Thyroid gland (tissue), 4 donors: ENCODE measurements at regions of chr5 and their contacts with region 1.

Region 1: DNA sequence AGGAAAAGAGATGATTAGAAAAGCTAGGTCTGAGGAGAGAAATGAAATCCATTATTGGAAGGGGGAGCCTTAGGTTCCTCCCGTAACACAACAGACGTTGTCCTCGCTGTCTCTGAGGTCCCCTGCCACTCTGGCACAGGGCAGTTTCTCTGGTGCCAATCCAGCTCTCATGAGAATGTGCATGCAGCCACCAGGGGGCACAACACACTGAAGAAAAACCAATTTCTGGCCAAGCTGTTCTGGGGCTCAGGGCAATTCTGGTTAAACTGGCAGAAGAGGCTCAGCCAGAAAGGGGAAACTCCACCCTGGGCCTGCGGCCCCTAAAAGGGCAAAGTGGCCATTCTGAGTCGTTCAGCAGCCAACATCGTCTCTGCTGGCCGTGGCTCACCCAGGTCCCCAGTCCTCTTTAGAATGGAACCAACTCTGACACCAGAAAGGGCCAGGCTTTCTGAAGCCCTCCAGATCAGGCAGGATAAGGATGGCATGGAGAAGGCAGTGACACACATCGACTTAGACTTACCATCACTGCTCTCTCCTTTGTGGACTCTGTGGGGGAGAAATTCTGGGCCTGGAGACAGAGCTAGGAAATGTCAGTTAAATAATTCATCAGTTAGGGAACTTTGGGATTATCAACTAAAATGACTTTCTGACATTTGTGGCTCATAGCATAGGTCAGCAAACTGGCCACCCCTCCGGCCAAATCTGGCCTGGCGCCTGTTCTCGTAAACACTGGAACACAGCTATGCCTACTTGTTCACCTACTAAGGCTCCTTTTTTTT is 58.5 kb upstream of the GOLPH3 start:
- DNase-seq: peak; percentile 84 to 88
- H3K4me3 ChIP-seq: no peak overlapping the region
- H3K27ac ChIP-seq: peak overlapping the region in 2 of 3 donors; percentile 37 to 47
- H3K4me1 ChIP-seq: peaks cover 11 to 26% of the 10 kb centered on the region in 2 donors
- H3K27me3 ChIP-seq: no peaks in the 10 kb centered on the region
- CTCF ChIP-seq: peak; percentile 72 to 91 (median 83)
- POLR2A ChIP-seq: no peak

Region 2: DNA sequence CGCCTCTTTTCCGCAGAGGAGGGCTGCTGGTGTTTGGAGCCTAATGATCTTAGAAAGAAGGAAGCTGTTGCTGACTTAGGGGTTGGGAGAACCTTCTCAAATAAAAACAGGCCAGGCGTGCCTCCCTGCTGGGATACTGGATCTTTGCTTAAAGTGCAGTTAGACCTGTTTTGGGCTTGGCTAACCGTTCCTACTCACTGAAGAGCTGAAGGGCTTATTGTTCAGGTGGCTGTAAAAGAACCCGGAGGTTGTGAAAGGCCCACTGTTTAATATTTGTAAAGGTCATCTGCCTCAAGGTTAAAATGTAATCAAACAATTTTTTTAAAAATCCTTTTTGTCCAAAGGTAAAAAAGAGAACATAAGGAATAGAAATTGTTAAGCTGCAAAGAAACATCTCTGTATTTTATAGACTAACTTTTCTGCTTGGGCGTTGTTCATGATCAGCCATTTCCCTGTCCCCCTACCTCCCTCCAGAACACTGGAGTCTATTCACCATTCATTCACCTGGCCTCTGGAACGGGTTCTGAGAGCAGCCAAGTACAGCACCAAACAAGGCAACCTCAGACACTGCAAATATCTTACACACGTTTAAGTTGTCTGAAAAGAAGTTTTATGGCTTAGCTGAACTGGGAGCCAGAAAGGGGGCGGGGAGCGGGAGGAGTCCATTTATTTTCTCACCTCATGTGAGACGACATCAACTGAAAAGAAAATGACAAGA is 98.7 kb after region 1 on chr5:
- intact Hi-C with region 1: loop called (anchors 5 kb)
- DNase-seq: peak; percentile 71 to 74
- H3K4me3 ChIP-seq: no peak overlapping the region
- H3K27ac ChIP-seq: peak overlapping the region; percentile 44 to 54 (median 52)
- H3K4me1 ChIP-seq: peaks cover 12% of the 10 kb centered on the region in 2 donors
- H3K27me3 ChIP-seq: no peaks in the 10 kb centered on the region
- CTCF ChIP-seq: no peak
- POLR2A ChIP-seq: no peak

Region 3: GRCh38 chr5:32585446-32586275 is 353.0 kb after region 1 on chr5 and contains the start of gene SUB1:
- intact Hi-C with region 1: loop called (anchors 10 kb)
- DNase-seq: peak; percentile 89 to 94
- H3K4me3 ChIP-seq: peak within 1 kb of the TSS; percentile 83 to 98 (median 96)
- H3K27ac ChIP-seq: peak within 1 kb of the TSS; percentile 95 to 99 (median 99)
- H3K4me1 ChIP-seq: peaks cover 8 to 9% of the 10 kb centered on the region in 2 donors
- H3K27me3 ChIP-seq: no peaks in the 10 kb centered on the region
- CTCF ChIP-seq: no peak
- POLR2A ChIP-seq: peak in 1 of 2 donors; percentile 82
- total RNA-seq, gene SUB1: 62.7 to 217 (median 113) TPM

Region 4: GRCh38 chr5:32613050-32613672 is 380.5 kb after region 1 on chr5:
- intact Hi-C with region 1: loop called (anchors 10 kb)
- DNase-seq: peak; percentile 76 to 85
- H3K4me3 ChIP-seq: no peak overlapping the region
- H3K27ac ChIP-seq: no peak overlapping the region
- H3K4me1 ChIP-seq: peaks cover 4 to 9% of the 10 kb centered on the region in 2 donors
- H3K27me3 ChIP-seq: no peaks in the 10 kb centered on the region
- CTCF ChIP-seq: peak; percentile 79 to 92 (median 84)
- POLR2A ChIP-seq: no peak

Region 5: DNA sequence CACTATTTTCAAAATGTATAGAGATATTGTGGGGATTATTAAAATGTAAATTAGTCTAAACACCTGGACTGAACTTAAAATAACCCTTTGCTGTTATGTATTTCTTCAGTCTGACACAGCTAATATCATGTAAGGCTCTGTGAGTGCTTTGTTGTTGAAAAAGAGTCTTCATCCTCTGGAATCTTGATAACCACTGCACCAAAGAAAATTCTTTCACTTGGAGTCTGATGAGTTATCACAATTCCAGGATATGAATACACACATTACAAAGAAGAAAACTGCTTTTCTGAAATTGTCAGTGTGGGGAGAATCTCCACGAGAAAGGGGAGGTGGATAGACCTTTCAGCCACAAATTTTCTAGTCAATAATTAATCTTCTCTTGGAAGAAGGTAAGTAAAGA is 1165.9 kb after region 1 on chr5:
- intact Hi-C with region 1: no loop called
- DNase-seq: no peak
- H3K4me3 ChIP-seq: no peak overlapping the region
- H3K27ac ChIP-seq: no peak overlapping the region
- H3K4me1 ChIP-seq: peaks cover 0 to 3% of the 10 kb centered on the region in 2 donors
- H3K27me3 ChIP-seq: no peaks in the 10 kb centered on the region
- CTCF ChIP-seq: no peak
- POLR2A ChIP-seq: no peak